ENCODE measurements at regions of chr5 and their contacts with region 1.

Region 1: DNA sequence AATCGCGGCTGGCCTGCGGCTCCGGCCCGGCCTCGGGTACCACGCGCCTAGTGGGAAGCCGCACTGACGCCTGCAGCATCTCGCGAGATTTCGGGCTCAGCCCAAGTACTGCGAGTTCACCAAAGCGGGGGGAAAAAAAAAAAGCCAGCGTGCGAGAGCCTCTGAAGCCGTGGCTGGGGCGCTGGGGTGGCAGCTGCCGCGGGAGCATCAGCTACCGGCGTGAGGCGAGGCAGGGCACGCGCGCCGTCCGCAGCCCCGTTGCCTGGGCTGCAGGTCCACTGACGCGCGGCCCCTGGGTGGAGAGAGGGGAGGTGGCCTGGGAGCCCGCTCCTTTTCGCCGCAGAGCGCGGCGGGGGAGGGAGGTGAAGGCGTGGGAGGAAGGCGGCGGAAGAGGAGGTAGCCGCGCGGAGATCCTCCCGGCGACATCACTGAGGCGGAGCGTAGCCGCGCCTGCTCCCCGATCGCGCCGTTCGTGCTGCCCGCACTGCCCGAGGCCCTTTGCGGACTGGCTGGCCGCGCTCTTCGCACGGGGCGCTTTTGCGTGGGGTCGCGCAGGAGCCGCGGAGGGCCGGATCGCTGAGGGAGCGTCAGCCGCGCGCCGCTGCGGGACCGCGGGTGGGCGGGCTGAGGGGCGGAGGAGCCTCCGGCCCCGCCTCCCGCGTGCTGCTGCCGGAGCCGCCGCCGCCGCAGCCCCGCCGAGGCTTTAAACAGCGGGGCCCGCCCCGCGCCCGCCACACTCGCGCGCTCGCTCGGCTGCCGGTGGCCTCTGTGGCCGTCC is at the start of gene SLC12A2:
- DNase-seq: peak; percentile 91 to 93
- ATAC-seq: peak; percentile 90 to 94 (median 90)
- H3K4me3 ChIP-seq: peak within 1 kb of the TSS; percentile 72 to 95 (median 78)
- H3K27ac ChIP-seq: peak within 1 kb of the TSS; percentile 85 to 99 (median 98)
- H3K4me1 ChIP-seq: peaks cover 0 to 75% (median 61%) of the 10 kb centered on the region in 9 donors
- H3K27me3 ChIP-seq: peaks cover 0 to 6% (median 0%) of the 10 kb centered on the region in 7 donors
- CTCF ChIP-seq: no peak
- total RNA-seq, gene SLC12A2: 11.9 to 23.0 (median 16.5) TPM

Region 2: DNA sequence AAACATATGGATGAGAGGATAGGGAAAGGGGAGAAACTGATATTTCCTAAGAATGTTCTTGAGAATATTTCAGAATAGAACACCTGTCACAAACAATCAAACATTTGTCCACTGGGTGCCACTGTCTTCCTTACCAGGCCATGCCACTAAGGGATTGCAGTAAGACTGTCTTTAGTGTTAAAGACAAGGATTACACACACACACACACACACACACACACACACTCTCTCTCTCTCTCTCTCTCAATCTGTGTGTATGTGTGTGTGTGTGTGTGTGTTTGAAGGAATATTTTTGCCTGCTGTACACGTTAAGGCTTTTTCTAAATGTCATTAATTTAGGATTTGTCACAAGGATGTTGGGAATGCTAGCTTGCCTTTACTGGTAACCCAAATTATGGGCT is 325.6 kb before region 1 on chr5:
- intact Hi-C with region 1: loop called in 7 of 10 experiments (anchors 5 to 10 kb)
- DNase-seq: peak in 1 of 2 donors; percentile 40
- ATAC-seq: peak in 7 of 8 donors; percentile 44 to 84 (median 69)
- H3K4me3 ChIP-seq: no peak overlapping the region
- H3K27ac ChIP-seq: no peak overlapping the region
- H3K4me1 ChIP-seq: peaks cover 0 to 11% (median 6%) of the 10 kb centered on the region in 9 donors
- H3K27me3 ChIP-seq: no peaks in the 10 kb centered on the region
- CTCF ChIP-seq: peak in 8 of 9 donors; percentile 22 to 67 (median 55)

Region 3: DNA sequence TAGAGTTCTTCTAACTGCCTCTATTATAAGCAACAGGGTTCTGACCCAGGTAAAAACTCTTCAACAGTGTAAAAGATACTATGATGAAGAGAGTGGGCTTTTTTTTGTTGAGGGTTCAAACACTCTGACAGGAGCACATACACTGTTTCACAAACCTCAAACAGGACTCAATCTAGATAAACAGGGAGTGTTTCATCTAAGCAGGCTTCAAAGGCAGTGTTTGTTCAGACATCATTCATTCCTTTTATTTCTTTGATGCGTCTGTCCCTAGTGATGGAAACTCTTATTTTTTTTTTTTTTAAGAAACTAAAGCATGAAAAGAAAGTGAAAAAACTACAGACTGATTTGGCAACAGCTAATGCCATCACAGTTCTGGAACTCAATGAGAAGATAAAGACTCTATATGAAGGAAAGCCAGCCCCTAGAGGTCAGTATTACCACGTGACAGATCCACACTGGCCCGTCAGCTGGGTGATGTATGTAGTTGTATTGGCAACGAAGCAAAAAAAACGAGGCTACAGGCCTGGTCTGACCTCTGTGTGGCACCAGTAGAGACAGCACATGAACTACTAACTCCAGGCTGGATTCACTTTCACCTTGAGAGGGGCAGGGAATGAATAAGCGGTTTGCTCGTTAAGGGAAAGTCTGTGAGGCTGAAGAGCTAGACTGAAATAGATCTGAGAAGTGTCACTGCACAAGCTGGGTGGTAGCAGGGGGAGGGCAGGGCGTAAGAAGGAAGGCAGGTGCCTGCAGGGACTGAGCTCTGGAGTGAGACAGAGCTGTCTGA is 207.8 kb before region 1 on chr5:
- intact Hi-C with region 1: loop called in 8 of 10 experiments (anchors 2 to 10 kb)
- DNase-seq: peak; percentile 24 to 53
- ATAC-seq: peak; percentile 72 to 96 (median 88)
- H3K4me3 ChIP-seq: no peak overlapping the region
- H3K27ac ChIP-seq: peak overlapping the region; percentile 22 to 74 (median 67)
- H3K4me1 ChIP-seq: peaks cover 2 to 61% (median 37%) of the 10 kb centered on the region in 9 donors
- H3K27me3 ChIP-seq: no peaks in the 10 kb centered on the region
- CTCF ChIP-seq: peak in 8 of 9 donors; percentile 7 to 59 (median 38)

Region 4: GRCh38 chr5:127959152-127959764 is 124.0 kb before region 1 on chr5:
- intact Hi-C with region 1: loop called in 3 of 10 experiments (anchors 2 to 5 kb)
- DNase-seq: peak; percentile 65 to 75
- ATAC-seq: peak in 7 of 8 donors; percentile 34 to 70 (median 47)
- H3K4me3 ChIP-seq: no peak overlapping the region
- H3K27ac ChIP-seq: peak overlapping the region in 8 of 10 donors; percentile 6 to 81 (median 60)
- H3K4me1 ChIP-seq: peaks cover 22 to 73% (median 40%) of the 10 kb centered on the region in 9 donors
- H3K27me3 ChIP-seq: no peaks in the 10 kb centered on the region
- CTCF ChIP-seq: no peak

Measured in heart right ventricle (tissue), 16 donors.